RWPE1 (cell line): ENCODE measurements at regions of chr7 and their contacts with region 1.

Region 1: DNA sequence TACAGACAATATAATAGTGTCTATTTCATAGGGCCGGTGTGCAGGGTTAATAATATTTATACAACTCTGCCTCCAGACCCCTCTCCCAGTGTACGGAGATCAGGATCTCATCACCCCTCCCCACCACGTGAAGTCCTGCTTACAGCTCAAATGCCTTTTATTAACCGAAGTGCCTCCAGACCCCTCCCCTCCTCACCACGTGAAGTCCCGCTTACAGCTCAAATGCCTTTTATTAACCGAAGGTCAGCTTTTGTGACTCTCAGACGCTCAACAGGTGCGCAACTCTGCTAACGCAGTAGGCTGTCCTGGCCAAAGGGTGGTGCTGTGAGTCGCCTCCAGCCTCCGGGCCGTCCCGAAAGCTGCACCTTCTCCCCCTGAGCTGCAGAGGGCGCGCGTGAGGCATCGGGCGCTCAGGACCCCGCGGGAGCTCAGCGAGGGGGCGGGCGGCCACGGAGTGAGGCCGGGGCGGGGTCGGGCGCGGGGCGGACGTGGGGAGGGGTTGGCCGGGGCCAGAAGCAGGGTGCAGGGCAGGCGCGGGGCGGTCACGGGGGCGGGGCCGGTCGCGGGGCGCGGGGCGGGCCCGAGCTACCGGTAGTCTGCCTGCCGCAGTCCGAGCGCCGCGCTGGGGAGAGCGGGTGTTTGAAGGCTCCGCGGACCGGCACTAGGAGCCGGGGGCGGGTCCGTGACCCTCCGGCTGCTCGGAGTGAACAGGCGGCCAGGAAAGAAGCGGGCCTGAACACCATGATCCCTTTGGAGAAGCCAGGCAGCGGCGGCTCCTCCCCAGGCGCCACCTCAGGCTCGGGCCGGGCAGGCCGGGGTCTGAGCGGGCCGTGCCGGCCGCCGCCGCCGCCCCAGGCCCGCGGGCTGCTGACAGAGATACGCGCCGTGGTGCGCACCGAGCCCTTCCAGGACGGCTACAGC is at the start of gene STK17A:
- DNase-seq: peak; percentile 95
- H3K27ac ChIP-seq: peak within 1 kb of the TSS; percentile 87
- CTCF ChIP-seq: peak; percentile 100

Region 2: DNA sequence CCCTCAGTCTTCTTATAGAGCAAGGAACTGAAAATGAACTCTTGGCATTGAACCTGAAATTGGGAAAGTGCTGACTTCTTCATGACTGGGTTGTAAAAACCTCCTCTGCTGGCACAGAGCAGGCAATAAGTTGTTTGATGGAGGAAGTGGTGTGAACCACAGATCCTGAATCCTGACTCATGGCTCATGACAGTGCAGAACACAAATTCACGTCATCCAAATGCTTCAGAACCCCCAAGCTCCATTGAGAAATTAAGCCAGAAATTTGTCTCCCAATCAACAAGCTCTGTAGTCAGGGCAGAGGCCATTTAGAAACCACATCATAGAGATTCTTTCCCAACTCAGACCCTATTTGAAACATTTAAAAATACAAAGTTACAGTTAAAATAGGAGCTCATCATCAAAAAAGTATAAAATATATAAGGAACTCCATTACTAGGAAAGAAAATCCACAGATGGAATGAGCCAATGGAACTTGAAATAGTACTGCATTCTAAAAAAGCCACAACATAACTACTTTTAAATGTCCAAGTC is 10.2 kb before region 1 on chr7:
- CTCF ChIA-PET with region 1: interaction called, 25 read pairs
- POLR2A ChIA-PET with region 1: interaction called, 3 read pairs
- DNase-seq: peak; percentile 83
- H3K27ac ChIP-seq: peak overlapping the region; percentile 83
- CTCF ChIP-seq: no peak

Region 3: GRCh38 chr7:43693687-43694398 is 111.1 kb after region 1 on chr7:
- CTCF ChIA-PET with region 1: interaction called, 10 read pairs
- POLR2A ChIA-PET with region 1: interaction called, 5 read pairs
- DNase-seq: peak; percentile 84
- H3K27ac ChIP-seq: no peak overlapping the region
- CTCF ChIP-seq: no peak

Region 4: DNA sequence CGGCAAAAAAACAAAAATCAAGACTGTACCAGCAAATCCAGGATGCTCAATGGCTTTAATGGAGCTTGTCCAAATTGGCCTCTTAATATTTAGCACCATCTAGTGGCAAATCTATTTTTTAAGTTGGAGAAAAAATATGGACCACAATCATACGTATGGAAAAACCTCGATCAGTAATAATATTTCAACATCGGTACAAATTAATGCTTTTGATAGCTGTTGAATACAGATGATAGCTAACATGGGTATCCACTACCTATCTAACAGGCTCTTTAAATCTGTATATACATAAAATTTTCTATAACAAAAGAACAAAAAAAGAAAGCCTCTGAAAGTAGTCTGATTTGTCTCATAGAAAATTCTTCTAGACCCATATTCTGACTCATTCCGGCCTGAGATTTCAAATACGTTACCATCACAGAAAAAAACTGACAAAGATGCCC is 117.3 kb after region 1 on chr7:
- CTCF ChIA-PET with region 1: interaction called, 44 read pairs
- POLR2A ChIA-PET with region 1: interaction called, 3 read pairs
- DNase-seq: peak; percentile 46
- H3K27ac ChIP-seq: no peak overlapping the region
- CTCF ChIP-seq: peak; percentile 91

Region 5: DNA sequence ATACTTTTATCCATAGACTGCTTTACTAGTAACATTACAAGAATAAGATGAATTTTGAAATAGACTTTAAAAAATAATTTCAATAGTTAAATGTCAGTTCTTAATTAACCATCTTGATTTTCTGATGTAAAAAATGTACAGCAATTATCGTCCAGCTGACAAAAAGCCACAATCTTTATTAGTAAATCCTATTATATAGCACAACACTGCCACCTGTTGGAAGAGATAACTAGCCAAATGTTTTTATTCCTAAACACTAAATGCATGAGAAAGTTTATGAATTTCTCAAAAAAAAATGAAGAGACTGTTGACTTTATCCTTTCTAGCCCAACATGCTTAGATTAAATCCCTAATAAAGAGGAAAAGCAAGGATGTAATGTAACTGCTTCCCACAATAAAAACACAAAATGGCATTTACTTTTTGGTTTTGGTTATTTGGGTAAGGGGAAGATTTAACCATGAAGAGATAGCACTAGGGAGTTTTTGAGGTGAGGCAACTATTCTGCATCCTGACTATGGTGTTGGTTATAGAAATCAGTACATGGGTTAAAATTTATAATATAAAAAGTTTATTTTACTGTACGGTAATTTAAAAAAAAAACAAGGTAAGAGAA is 138.5 kb after region 1 on chr7:
- CTCF ChIA-PET with region 1: interaction called, 30 read pairs
- POLR2A ChIA-PET with region 1: no interaction called
- DNase-seq: peak; percentile 33
- H3K27ac ChIP-seq: no peak overlapping the region
- CTCF ChIP-seq: peak; percentile 84

Region 6: GRCh38 chr7:43729214-43729923 is 146.6 kb after region 1 on chr7 and contains the start of gene COA1:
- CTCF ChIA-PET with region 1: interaction called, 11 read pairs
- POLR2A ChIA-PET with region 1: no interaction called
- DNase-seq: peak; percentile 86
- H3K27ac ChIP-seq: peak within 1 kb of the TSS; percentile 89
- CTCF ChIP-seq: no peak

Region 7: GRCh38 chr7:43838201-43838659 is 255.5 kb after region 1 on chr7:
- CTCF ChIA-PET with region 1: interaction called, 22 read pairs
- POLR2A ChIA-PET with region 1: no interaction called
- DNase-seq: no peak
- H3K27ac ChIP-seq: no peak overlapping the region
- CTCF ChIP-seq: no peak